HEK293 (cell line): ENCODE measurements at regions of chr3 and their contacts with region 1.

Region 1: DNA sequence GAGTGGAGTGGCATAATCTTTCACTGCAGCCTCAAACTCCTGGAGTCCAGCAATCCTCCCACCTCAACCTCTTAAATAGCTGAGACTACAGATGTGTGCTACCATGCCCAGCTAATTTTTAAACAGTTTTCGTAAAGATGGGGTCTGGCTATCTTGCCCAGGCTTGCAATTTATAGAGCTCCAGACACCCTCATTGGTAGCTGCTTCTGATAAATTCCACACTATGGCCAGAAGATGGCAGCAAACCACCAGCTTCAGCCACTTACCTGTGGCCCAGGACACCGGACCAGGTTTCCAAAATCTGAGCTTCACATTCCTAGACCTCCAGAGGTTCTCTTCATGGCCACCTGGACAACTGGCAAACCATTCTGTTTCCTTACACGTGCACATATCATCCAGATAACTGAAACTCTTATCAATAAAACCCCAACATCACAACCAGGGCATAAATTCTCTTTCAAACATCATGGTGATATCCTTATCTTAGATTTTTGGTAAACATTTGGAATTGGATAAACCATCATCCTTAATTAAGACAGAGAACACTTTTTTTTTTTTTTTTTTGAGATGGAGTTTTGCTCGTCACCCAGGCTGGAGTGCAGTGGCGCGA is 28.9 kb downstream of the FBXW12 start:
- H3K4me3 ChIP-seq: no peak overlapping the region
- H3K27ac ChIP-seq: no peak overlapping the region
- H3K4me1 ChIP-seq: no peaks in the 10 kb centered on the region
- CTCF ChIP-seq: no peak

Region 2: DNA sequence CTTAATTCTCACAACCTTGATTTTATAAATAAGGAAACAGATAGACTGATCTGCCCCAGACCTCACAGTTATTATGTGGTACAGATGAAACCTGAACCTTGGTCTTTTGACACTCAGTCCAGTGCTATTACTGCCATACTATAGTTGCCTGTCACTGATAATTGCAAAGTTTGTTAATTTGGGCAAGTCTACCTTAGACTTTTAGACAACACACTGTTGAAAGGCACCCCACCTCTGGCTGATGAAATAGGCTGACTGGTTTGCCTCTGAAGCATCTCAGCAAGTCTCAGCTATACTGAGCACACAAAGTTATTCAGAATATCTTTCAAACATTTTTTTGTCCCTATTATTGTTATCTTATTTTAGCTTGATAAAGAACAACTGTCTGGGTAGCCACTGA is 331.6 kb before region 1 on chr3:
- CTCF ChIA-PET with region 1: no interaction called
- POLR2A ChIA-PET with region 1: no interaction called
- H3K4me3 ChIP-seq: no peak overlapping the region
- H3K27ac ChIP-seq: no peak overlapping the region
- H3K4me1 ChIP-seq: 0 out of 2 replicates have a peak, but pooled peaks cover 3% of the 10 kb centered on the region
- CTCF ChIP-seq: no peak

Region 3: GRCh38 chr3:48247401-48247811 is 153.5 kb before region 1 on chr3:
- CTCF ChIA-PET with region 1: no interaction called
- POLR2A ChIA-PET with region 1: no interaction called
- H3K4me3 ChIP-seq: no peak overlapping the region
- H3K27ac ChIP-seq: no peak overlapping the region
- H3K4me1 ChIP-seq: no peaks in the 10 kb centered on the region
- CTCF ChIP-seq: no peak

Region 4: DNA sequence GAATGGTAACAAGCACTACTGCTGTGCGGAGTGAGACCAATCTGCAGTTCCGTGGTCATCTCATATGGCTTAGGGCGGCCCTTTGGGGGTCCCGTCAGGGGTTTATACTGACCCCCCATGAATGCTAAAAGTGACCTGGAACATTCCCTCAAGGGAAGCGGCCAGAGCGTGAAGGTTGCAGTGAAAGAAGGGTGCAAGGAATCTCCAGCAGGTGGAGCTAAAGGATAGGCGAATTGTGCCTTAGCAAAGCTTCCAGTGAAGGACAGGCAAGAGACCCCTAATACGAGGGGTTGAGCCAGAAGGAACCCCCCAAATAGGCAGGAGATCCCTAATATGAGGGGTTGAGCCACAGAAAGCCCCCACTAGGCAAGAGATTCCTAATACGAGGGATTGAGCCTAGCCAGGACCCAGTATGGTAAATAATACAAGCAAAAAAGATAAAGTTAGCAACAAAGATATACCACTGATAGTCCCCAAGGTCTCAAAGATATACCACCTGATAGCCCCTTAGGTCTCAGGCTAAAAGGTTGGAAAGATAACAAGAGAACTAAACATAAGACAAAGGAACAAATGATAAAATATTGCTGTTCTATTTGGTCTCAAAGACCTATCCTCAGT is 127.2 kb before region 1 on chr3:
- CTCF ChIA-PET with region 1: interaction called, 16 read pairs
- POLR2A ChIA-PET with region 1: no interaction called
- H3K4me3 ChIP-seq: no peak overlapping the region
- H3K27ac ChIP-seq: no peak overlapping the region
- H3K4me1 ChIP-seq: no peaks in the 10 kb centered on the region
- CTCF ChIP-seq: no peak

Region 5: DNA sequence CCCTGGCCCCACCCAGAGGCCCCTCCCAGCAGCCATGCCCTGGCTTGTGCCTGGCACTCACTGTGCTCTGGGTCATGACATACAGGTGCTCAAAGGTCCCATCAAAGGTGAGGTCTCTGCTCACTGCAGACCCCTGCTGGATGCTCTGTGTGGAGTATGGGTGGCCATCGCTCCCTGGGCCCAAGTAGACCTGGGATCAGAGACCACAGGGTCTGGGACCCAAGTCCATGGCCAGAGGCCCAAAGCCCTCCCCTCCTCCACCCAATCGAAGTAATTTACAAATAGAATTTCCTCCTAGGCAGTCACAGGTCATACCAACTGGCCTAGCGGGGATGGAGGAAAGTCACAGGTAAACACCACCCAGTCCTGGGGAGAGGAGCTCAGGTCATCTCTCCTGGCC is 21.3 kb after region 1 on chr3:
- CTCF ChIA-PET with region 1: interaction called, 10 read pairs
- POLR2A ChIA-PET with region 1: interaction called, 3 read pairs
- H3K4me3 ChIP-seq: no peak overlapping the region
- H3K27ac ChIP-seq: no peak overlapping the region
- H3K4me1 ChIP-seq: no peaks in the 10 kb centered on the region
- CTCF ChIP-seq: 0 out of 2 replicates have a peak, but pooled peaks have one; percentile 10

Region 6: GRCh38 chr3:48507351-48508061 is 106.6 kb after region 1 on chr3:
- CTCF ChIA-PET with region 1: interaction called, 10 read pairs
- POLR2A ChIA-PET with region 1: interaction called, 3 read pairs
- H3K4me3 ChIP-seq: no peak overlapping the region
- H3K27ac ChIP-seq: no peak overlapping the region
- H3K4me1 ChIP-seq: no peaks in the 10 kb centered on the region
- CTCF ChIP-seq: peak; percentile 70

Region 7: GRCh38 chr3:48556793-48557626 is 156.1 kb after region 1 on chr3 and contains the start of gene PFKFB4:
- CTCF ChIA-PET with region 1: interaction called, 15 read pairs
- POLR2A ChIA-PET with region 1: interaction called, 4 read pairs
- H3K4me3 ChIP-seq: peak within 1 kb of the TSS; percentile 71
- H3K27ac ChIP-seq: peak within 1 kb of the TSS; percentile 10; the same call in 1 of the 2 replicates
- H3K4me1 ChIP-seq: no peaks in the 10 kb centered on the region
- CTCF ChIP-seq: no peak